Activated naive CD4-positive, alpha-beta T cell treated with anti-CD3 and anti-CD28 coated beads for 36 hours (primary cell): ENCODE measurements at regions of chr5 and their contacts with region 1.

Region 1: DNA sequence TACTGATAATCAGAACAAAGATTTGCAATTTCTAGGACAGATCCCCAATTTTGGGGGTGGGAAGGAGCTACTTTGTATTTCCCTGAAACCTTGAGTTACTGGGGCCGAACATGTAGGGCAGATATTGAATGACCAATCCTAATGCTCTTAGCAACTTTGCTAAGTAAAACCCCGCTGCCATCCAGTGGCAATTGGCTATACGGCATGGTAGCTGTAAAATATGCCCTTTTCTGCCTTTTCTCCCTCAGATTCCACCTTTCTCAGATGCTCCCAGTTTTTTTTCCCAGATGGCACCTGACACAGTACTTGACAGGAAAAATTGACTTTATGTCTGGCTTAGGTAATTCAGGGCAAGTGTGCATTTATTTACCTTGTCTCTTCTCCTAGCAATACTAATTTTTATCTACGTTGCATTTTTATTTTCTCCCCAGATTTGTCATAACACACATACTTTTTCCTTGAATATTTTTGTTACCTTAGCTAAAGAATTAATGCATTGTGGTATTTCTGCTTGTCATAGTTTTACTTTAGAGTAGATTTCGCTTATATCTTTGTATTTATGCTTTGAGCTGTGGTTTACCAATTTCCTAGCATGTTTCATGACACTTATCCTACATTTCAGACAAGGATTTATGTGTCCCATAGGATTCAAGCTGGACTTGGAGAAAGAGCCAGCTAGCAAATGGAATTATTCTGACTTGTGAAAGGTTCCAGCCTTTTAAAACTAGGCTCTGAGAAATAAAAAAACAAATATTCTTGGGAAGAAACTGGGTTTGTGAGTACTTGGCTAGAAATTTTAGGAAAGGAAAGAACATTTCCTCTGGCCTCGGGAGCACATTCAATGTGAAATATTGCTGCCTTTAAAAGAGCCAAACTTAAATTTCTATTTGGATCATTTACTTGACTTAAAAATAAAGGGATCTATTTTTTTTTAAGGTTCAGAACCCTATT is 37.4 kb downstream of the PIK3R1 start:
- DNase-seq: peak; percentile 70
- H3K4me3 Mint-ChIP-seq: no peak overlapping the region
- H3K27ac Mint-ChIP-seq: peak overlapping the region; percentile 47
- H3K4me1 Mint-ChIP-seq: peaks cover 91% of the 10 kb centered on the region
- H3K27me3 Mint-ChIP-seq: no peaks in the 10 kb centered on the region

Region 2: GRCh38 chr5:66828548-66829357 is 1424.2 kb before region 1 on chr5:
- CTCF ChIA-PET with region 1: no interaction called
- intact Hi-C with region 1: loop called (anchors 10 kb)
- DNase-seq: peak; percentile 84
- H3K4me3 Mint-ChIP-seq: peak overlapping the region; percentile 87
- H3K27ac Mint-ChIP-seq: peak overlapping the region; percentile 84
- H3K4me1 Mint-ChIP-seq: peaks cover 24% of the 10 kb centered on the region
- H3K27me3 Mint-ChIP-seq: peaks cover 29% of the 10 kb centered on the region

Region 3: DNA sequence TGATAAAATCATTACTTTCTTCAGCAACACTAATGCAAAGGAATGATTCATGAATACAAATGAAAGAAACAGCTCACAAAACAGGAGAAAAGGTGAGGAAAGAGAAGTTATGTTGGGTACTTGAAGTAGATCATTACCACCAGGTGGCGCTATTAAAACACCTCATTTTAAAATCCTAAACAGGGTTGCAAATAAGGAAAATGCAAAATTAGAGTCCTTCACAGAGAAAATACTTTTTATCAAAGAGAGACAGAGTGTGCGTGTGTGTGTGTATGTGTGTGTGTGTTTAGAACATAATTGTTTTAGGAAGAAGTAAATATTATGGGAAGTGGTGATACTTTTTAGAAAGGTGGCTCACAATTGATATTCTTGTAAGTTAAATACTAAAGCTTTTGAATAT is 1006.8 kb before region 1 on chr5:
- CTCF ChIA-PET with region 1: interaction called, 3 read pairs
- intact Hi-C with region 1: loop called (anchors 1 kb)
- DNase-seq: no peak
- H3K4me3 Mint-ChIP-seq: no peak overlapping the region
- H3K27ac Mint-ChIP-seq: no peak overlapping the region
- H3K4me1 Mint-ChIP-seq: peaks cover 8% of the 10 kb centered on the region
- H3K27me3 Mint-ChIP-seq: no peaks in the 10 kb centered on the region

Region 4: DNA sequence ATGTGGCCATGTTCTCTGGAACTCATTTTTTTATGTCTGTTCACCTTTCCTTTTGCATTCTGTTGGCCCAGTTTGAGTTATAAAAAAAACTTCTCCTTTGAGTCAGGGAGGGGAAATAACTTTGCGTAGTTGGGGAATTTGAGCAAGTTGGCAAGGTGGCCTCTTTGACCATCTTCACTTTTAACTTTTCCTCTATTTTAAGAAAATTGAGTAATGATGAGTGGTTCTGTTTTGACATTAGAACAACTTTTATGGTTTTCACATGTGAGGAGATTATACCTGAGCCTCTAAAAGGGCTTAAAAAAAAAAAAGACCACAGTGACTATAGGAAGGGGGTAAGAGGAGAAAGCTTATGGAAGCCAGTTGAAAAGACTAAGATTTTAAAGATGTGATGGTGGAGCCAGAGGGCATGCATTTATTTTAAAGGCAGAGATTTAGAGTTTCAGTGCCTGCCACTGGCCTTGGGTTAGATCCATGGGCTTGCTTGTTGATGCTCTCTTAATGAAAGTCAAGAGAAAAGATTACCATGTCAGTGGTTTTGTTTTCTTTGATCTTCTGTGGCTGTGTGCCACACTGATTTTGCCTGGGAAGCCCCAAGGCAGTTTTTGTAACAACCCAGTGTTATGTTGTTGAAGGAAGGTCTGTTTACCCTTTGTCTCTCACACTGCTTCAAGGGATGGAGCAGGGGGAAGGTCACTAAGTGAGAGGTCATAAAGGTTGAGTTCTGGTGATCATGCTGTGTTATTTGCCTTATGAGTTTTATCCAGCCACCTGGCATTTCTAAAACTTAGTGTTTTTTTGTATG is 836.6 kb before region 1 on chr5:
- CTCF ChIA-PET with region 1: no interaction called
- intact Hi-C with region 1: loop called (anchors 5 kb)
- DNase-seq: peak; percentile 52
- H3K4me3 Mint-ChIP-seq: no peak overlapping the region
- H3K27ac Mint-ChIP-seq: peak overlapping the region; percentile 53
- H3K4me1 Mint-ChIP-seq: peaks cover 16% of the 10 kb centered on the region
- H3K27me3 Mint-ChIP-seq: no peaks in the 10 kb centered on the region

Region 5: DNA sequence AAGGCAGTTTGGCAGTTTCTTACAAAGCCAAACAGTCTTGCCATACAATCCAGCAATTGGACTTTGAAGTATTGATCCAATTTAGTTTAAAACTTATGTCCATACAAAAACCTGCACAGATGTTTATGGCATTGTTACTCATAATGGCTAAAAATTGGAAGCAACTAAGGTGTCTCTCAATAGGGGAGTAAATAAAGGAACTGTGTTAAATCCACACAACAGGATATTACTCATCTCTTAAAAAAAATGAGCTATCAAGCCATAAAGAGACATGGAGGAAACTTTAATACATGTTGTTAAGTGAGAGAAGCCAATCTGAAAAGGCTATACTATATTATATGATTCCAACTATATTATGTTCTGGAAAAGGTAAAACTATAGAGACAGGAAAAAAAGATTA is 742.7 kb before region 1 on chr5:
- CTCF ChIA-PET with region 1: no interaction called
- intact Hi-C with region 1: loop called (anchors 5 kb)
- DNase-seq: no peak
- H3K4me3 Mint-ChIP-seq: no peak overlapping the region
- H3K27ac Mint-ChIP-seq: no peak overlapping the region
- H3K4me1 Mint-ChIP-seq: peaks cover 39% of the 10 kb centered on the region
- H3K27me3 Mint-ChIP-seq: no peaks in the 10 kb centered on the region

Region 6: GRCh38 chr5:68070591-68071281 is 182.2 kb before region 1 on chr5:
- CTCF ChIA-PET with region 1: no interaction called
- intact Hi-C with region 1: loop called (anchors 5 kb)
- DNase-seq: peak; percentile 7
- H3K4me3 Mint-ChIP-seq: no peak overlapping the region
- H3K27ac Mint-ChIP-seq: no peak overlapping the region
- H3K4me1 Mint-ChIP-seq: peaks cover 12% of the 10 kb centered on the region
- H3K27me3 Mint-ChIP-seq: no peaks in the 10 kb centered on the region

Region 7: DNA sequence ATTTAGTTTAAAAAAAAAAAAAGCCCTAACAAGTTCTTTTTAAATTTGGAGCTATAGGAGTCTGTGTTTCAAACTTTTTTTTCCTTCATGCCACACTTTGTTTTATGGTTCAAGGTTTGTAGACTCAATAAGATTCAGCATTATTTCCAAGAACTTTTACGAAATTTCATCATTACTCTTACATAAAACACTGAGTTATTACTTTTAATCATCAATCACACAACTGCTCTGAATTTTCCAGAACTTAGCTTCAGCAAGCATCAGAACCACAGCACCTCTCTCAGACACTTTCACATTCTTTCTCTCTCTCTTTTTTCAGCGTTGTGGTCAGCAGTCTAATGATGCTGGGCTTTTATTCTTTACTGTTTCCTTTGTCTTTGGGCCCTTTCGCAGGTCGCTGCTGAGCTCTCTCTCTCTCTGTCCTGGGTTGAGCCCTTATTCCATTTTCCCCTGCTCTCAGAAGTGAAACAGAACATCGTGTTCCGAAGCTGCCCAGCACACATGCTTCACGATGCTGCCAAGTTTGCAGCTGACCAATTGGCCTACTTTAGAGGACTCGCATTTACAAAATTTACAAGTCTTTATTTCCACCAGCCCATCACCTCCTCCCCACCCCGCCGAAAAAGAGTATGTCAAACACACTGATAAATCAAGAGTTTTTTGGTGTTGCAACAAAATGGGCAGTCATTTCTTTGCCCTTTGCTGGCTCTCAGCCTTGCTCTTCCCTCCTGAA is 82.0 kb before region 1 on chr5:
- CTCF ChIA-PET with region 1: no interaction called
- intact Hi-C with region 1: no loop called
- DNase-seq: no peak
- H3K4me3 Mint-ChIP-seq: no peak overlapping the region
- H3K27ac Mint-ChIP-seq: no peak overlapping the region
- H3K4me1 Mint-ChIP-seq: no peaks in the 10 kb centered on the region
- H3K27me3 Mint-ChIP-seq: no peaks in the 10 kb centered on the region

Region 8: DNA sequence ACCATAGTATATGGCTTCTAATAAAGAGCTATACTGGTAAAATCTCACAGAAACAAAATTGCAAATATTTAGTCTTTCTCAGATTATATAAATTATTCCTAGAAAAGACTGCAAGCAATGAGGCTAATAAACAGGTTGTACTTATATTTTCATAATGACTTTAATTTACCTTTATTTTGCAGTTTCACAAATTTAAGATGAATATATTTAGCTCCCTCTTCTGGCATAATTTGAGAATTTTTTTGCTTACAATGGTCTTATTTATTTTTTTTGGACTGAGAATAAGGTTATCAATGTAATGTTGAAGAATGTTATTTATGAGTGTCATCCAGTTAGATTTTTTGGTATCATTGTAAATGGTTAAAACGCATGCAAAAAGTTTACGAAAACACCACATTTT is 19.3 kb after region 1 on chr5:
- CTCF ChIA-PET with region 1: interaction called, 14 read pairs
- intact Hi-C with region 1: loop called (anchors 1 kb)
- DNase-seq: no peak
- H3K4me3 Mint-ChIP-seq: no peak overlapping the region
- H3K27ac Mint-ChIP-seq: peak overlapping the region; percentile 36
- H3K4me1 Mint-ChIP-seq: peaks cover 82% of the 10 kb centered on the region
- H3K27me3 Mint-ChIP-seq: no peaks in the 10 kb centered on the region